ENCODE measurements at regions of chr18 and their contacts with region 1.

Region 1: DNA sequence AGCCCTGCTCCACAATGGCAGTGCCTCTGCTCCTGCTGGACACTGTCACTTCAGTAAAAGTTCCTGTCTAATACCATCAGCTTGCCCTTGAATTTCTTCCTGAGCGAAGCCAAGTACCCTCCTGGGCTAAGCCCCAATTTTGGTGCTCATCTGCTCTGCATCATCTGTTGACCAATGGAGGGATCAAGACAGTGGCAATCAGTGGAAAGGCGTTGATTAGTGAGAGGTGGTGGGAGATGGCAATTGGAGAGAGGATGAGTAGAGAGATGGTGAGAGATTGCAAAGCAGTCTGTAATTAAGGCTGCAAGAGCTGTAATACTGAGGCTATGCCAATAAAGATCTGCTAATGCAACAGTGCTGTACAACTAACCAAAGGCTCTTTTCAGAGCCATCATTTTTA is 299.4 kb upstream of the CDH2 start:
- DNase-seq: no peak
- ATAC-seq: no peak
- H3K4me3 ChIP-seq: no peak overlapping the region
- H3K4me3 Mint-ChIP-seq: no peak overlapping the region
- H3K27ac ChIP-seq: no peak overlapping the region
- H3K27ac Mint-ChIP-seq: no peak overlapping the region
- H3K4me1 ChIP-seq: no peaks in the 10 kb centered on the region
- H3K4me1 Mint-ChIP-seq: no peaks in the 10 kb centered on the region
- H3K27me3 ChIP-seq: no peaks in the 10 kb centered on the region
- H3K27me3 Mint-ChIP-seq: no peaks in the 10 kb centered on the region
- CTCF ChIP-seq: no peak

Region 2: DNA sequence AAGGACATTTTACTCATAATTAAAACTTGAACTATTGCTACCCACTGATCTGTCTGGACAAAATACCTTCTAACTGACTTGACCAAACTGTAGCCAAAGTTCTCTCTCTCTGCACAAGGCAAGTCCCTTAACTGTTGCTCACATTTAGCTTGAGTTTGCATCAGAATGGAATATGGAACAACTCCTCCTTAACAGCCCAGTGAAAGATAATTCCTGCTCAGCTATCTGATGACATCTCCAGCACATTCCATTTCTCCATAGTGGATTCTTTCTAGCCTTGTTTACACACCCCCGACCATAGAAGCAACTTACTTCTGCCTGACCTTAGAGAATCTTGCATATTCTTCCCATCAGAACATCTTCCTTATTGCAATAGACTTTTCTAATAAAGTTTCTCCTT is 17.8 kb after region 1 on chr18:
- CTCF ChIA-PET with region 1: no interaction called
- POLR2A ChIA-PET with region 1: interaction called, 3 read pairs
- intact Hi-C with region 1: loop called in 1 of 2 experiments (anchors 2 kb)
- DNase-seq: no peak
- ATAC-seq: no peak
- H3K4me3 ChIP-seq: no peak overlapping the region
- H3K4me3 Mint-ChIP-seq: no peak overlapping the region
- H3K27ac ChIP-seq: no peak overlapping the region
- H3K27ac Mint-ChIP-seq: no peak overlapping the region
- H3K4me1 ChIP-seq: no peaks in the 10 kb centered on the region
- H3K4me1 Mint-ChIP-seq: no peaks in the 10 kb centered on the region
- H3K27me3 ChIP-seq: no peaks in the 10 kb centered on the region
- H3K27me3 Mint-ChIP-seq: no peaks in the 10 kb centered on the region
- CTCF ChIP-seq: no peak

Measured in CD8-positive, alpha-beta T cell (primary cell).